Esophagus squamous epithelium (tissue), 5 donors: ENCODE measurements at regions of chr5 and their contacts with region 1.

Region 1: DNA sequence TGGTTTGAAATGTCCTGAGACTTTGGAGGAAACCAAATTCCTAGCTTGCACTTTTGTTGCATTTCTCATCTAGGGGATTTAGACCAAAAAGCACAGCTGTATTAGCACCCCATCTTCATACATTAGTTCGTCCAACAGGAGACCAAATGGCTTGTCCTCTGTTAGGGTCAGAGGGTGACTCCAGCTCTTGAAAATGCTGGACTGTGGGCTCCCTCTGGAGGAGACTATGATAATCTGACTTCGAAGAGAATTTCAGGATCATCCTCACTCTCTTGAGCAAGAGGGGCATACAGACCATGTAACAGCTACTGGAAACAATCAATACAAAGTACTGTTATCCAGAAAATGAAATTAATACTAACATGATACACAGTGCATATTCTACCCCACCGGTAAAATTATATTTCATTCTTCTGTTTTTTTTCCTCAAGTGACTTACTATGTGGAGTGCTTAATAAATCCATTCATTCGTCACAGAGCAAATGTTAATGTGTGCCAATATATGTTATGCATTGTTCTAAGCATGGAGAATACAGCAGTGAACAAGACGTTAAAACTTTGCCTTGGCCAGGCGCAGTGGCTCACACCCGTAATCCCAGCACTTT is 63.7 kb upstream of the PPP2CA start:
- DNase-seq: no peak
- H3K4me3 ChIP-seq: no peak overlapping the region
- H3K27ac ChIP-seq: no peak overlapping the region
- H3K4me1 ChIP-seq: no peaks in the 10 kb centered on the region
- H3K27me3 ChIP-seq: no peaks in the 10 kb centered on the region
- CTCF ChIP-seq: peak; percentile 41 to 79 (median 72)
- POLR2A ChIP-seq: no peak

Region 2: GRCh38 chr5:133723651-133724366 is 565.8 kb before region 1 on chr5:
- intact Hi-C with region 1: no loop called
- DNase-seq: no peak
- H3K4me3 ChIP-seq: no peak overlapping the region
- H3K27ac ChIP-seq: no peak overlapping the region
- H3K4me1 ChIP-seq: no peaks in the 10 kb centered on the region
- H3K27me3 ChIP-seq: no peaks in the 10 kb centered on the region
- CTCF ChIP-seq: no peak
- POLR2A ChIP-seq: no peak

Region 3: GRCh38 chr5:134184155-134185135 is 105.2 kb before region 1 on chr5:
- intact Hi-C with region 1: loop called (anchors 5 kb)
- DNase-seq: peak; percentile 5
- H3K4me3 ChIP-seq: no peak overlapping the region
- H3K27ac ChIP-seq: no peak overlapping the region
- H3K4me1 ChIP-seq: no peaks in the 10 kb centered on the region
- H3K27me3 ChIP-seq: no peaks in the 10 kb centered on the region
- CTCF ChIP-seq: peak; percentile 56 to 93 (median 86)
- POLR2A ChIP-seq: no peak